Activated CD4-positive, alpha-beta memory T cell treated with anti-CD3 and anti-CD28 coated beads for 36 hours (primary cell): ENCODE measurements at regions of chr6 and their contacts with region 1.

Region 1: GRCh38 chr6:31087494-31088089 is 24.8 kb downstream of the C6orf15 start:
- DNase-seq: peak; percentile 92
- H3K4me3 Mint-ChIP-seq: peak overlapping the region; percentile 12
- H3K27ac Mint-ChIP-seq: peak overlapping the region; percentile 45
- H3K4me1 Mint-ChIP-seq: peaks cover 11% of the 10 kb centered on the region
- H3K27me3 Mint-ChIP-seq: no peaks in the 10 kb centered on the region

Region 2: GRCh38 chr6:30443657-30444450 is 643.7 kb before region 1 on chr6:
- CTCF ChIA-PET with region 1: no interaction called
- POLR2A ChIA-PET with region 1: no interaction called
- intact Hi-C with region 1: no loop called
- DNase-seq: peak; percentile 22
- H3K4me3 Mint-ChIP-seq: no peak overlapping the region
- H3K27ac Mint-ChIP-seq: no peak overlapping the region
- H3K4me1 Mint-ChIP-seq: peaks cover 7% of the 10 kb centered on the region
- H3K27me3 Mint-ChIP-seq: peaks cover 72% of the 10 kb centered on the region

Region 3: DNA sequence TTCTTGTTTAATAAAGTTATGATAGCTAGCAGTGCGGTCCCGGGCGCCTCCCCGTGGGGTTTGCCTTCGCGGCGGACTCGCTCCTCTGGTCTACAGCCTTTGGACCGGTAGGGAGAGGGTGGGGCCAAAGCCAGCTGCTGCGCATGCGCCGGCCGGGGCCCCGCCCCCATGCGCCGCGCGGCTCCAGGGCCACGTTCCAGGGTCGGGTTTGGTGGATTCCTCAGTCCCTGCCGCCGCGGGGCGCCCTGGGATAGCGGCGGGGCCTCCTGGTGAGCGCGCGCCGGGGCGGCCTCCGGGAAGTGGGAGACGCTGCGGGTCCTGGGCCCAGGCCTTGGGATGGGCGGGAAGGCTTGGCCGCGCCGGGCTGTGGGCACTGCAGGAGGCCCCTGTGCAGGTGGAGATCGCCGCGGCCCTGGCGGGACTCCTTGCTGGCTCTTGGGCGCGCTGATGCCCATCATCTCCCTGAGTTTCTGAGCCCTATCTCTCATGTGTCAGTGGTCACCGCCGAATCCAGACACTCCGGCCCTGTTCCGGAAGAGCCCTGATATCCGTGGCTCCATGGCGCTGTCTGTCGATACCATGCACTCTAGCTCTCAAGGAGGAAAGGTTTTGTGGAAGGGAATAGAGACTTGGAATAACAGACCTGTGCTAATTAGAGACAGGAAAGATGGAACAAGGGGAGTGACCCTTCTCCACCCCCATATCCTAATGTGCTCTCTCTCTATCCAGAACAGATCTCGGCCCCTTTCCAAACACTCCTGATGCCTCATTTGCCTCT is 173.3 kb before region 1 on chr6 and contains the start of gene VARS2:
- CTCF ChIA-PET with region 1: interaction called, 36 read pairs
- POLR2A ChIA-PET with region 1: no interaction called
- intact Hi-C with region 1: no loop called
- DNase-seq: peak; percentile 93
- H3K4me3 Mint-ChIP-seq: peak within 1 kb of the TSS; percentile 94
- H3K27ac Mint-ChIP-seq: peak within 1 kb of the TSS; percentile 82
- H3K4me1 Mint-ChIP-seq: peaks cover 29% of the 10 kb centered on the region
- H3K27me3 Mint-ChIP-seq: no peaks in the 10 kb centered on the region
- total RNA-seq, gene VARS2: 56.9 to 68.9 TPM

Region 4: GRCh38 chr6:31068669-31069340 is 18.8 kb before region 1 on chr6:
- CTCF ChIA-PET with region 1: interaction called, 11 read pairs
- POLR2A ChIA-PET with region 1: no interaction called
- intact Hi-C with region 1: no loop called
- DNase-seq: peak; percentile 81
- H3K4me3 Mint-ChIP-seq: no peak overlapping the region
- H3K27ac Mint-ChIP-seq: no peak overlapping the region
- H3K4me1 Mint-ChIP-seq: no peaks in the 10 kb centered on the region
- H3K27me3 Mint-ChIP-seq: no peaks in the 10 kb centered on the region